T-cell (primary cell): ENCODE measurements at regions of chr3 and their contacts with region 1.

Region 1: DNA sequence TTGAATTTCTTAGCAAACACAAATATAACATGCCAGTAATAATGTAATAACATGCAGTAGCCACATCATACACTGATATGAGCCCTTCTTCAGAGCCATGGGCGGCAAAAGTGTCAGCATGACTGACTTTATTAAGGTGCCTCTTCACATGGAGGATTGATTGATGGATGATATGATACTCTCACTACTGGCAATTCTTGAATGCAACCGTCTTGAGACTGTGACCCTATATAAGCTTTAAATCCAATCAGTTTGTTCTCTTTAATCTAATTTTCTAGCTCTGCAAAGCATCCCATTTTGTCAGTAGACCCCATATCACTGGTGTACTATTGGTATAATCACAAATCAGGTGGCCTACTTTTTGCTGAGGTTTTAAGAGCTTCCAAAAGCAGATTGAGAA is 463.7 kb upstream of the ROBO2 start:
- DNase-seq: no peak
- ATAC-seq: no peak
- H3K4me3 ChIP-seq: no peak overlapping the region
- H3K4me3 Mint-ChIP-seq: no peak overlapping the region
- H3K27ac ChIP-seq: no peak overlapping the region
- H3K27ac Mint-ChIP-seq: no peak overlapping the region
- H3K4me1 ChIP-seq: no peaks in the 10 kb centered on the region
- H3K4me1 Mint-ChIP-seq: no peaks in the 10 kb centered on the region
- H3K27me3 ChIP-seq: no peaks in the 10 kb centered on the region
- H3K27me3 Mint-ChIP-seq: no peaks in the 10 kb centered on the region

Region 2: GRCh38 chr3:75242012-75242735 is 1334.0 kb before region 1 on chr3:
- CTCF ChIA-PET with region 1: no interaction called
- POLR2A ChIA-PET with region 1: no interaction called
- DNase-seq: no peak
- ATAC-seq: no peak
- H3K4me3 ChIP-seq: no peak overlapping the region
- H3K4me3 Mint-ChIP-seq: no peak overlapping the region
- H3K27ac ChIP-seq: no peak overlapping the region
- H3K27ac Mint-ChIP-seq: no peak overlapping the region
- H3K4me1 ChIP-seq: no peaks in the 10 kb centered on the region
- H3K4me1 Mint-ChIP-seq: no peaks in the 10 kb centered on the region
- H3K27me3 ChIP-seq: no peaks in the 10 kb centered on the region
- H3K27me3 Mint-ChIP-seq: peaks cover 0 to 2% of the 10 kb centered on the region in 2 donors

Region 3: GRCh38 chr3:76505202-76505845 is 70.9 kb before region 1 on chr3:
- CTCF ChIA-PET with region 1: no interaction called
- POLR2A ChIA-PET with region 1: interaction called in 1 of 2 experiments, 16 read pairs
- DNase-seq: no peak
- ATAC-seq: no peak
- H3K4me3 ChIP-seq: no peak overlapping the region
- H3K4me3 Mint-ChIP-seq: no peak overlapping the region
- H3K27ac ChIP-seq: no peak overlapping the region
- H3K27ac Mint-ChIP-seq: no peak overlapping the region
- H3K4me1 ChIP-seq: no peaks in the 10 kb centered on the region
- H3K4me1 Mint-ChIP-seq: no peaks in the 10 kb centered on the region
- H3K27me3 ChIP-seq: no peaks in the 10 kb centered on the region
- H3K27me3 Mint-ChIP-seq: no peaks in the 10 kb centered on the region

Region 4: GRCh38 chr3:76624164-76624563 is 48.0 kb after region 1 on chr3:
- CTCF ChIA-PET with region 1: no interaction called
- POLR2A ChIA-PET with region 1: no interaction called
- DNase-seq: no peak
- ATAC-seq: no peak
- H3K4me3 ChIP-seq: no peak overlapping the region
- H3K4me3 Mint-ChIP-seq: no peak overlapping the region
- H3K27ac ChIP-seq: no peak overlapping the region
- H3K27ac Mint-ChIP-seq: no peak overlapping the region
- H3K4me1 ChIP-seq: no peaks in the 10 kb centered on the region
- H3K4me1 Mint-ChIP-seq: no peaks in the 10 kb centered on the region
- H3K27me3 ChIP-seq: no peaks in the 10 kb centered on the region
- H3K27me3 Mint-ChIP-seq: no peaks in the 10 kb centered on the region